PC-3 (cell line): ENCODE measurements at regions of chr7 and their contacts with region 1.

Region 1: DNA sequence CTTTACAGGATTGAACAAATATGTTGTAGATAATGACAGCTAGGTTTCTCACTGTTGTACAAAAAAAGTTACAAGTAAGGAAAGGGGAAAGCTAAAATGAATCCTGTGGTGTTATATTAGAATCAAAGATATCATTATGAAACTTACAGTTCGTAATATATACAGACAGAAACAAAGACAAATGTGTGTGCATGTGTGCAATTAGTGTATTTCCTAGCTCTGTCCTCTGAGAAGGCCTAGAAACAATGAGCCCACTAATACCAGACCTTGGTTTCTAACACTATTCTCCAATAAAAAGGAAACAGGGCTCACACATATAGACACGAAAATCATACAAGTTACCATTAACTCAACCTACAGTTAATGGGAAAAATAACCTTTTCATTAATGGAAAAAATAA is 8.0 kb downstream of the KDM7A start:
- DNase-seq: no peak
- ATAC-seq: no peak
- H3K4me3 ChIP-seq: no peak overlapping the region
- H3K27ac ChIP-seq: no peak overlapping the region
- H3K4me1 ChIP-seq: 0 out of 2 replicates have a peak, but pooled peaks cover 9% of the 10 kb centered on the region
- H3K27me3 ChIP-seq: no peaks in the 10 kb centered on the region
- CTCF ChIP-seq: no peak

Region 2: DNA sequence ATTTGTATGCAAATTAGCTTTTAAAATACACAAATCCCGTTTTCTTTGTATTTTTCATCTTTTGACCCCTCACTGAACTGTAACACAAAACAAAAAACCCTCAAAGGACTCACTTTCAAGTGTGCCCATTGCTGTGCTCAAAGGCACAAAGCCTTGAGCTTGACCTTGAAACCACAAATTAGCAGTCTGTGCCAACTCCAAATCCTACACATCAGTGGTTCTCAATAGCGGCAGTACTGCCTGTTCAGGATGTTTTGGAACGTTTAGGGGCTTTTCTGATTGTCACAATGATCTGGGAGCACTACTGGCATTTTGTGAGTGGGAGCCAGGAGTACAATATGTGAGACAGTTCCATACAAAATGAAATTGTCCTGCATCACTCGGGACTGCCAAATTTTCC is 47.5 kb before region 1 on chr7:
- CTCF ChIA-PET with region 1: no interaction called
- POLR2A ChIA-PET with region 1: interaction called, 10 read pairs
- intact Hi-C with region 1: no loop called
- DNase-seq: no peak
- ATAC-seq: no peak
- H3K4me3 ChIP-seq: no peak overlapping the region
- H3K27ac ChIP-seq: no peak overlapping the region
- H3K4me1 ChIP-seq: no peaks in the 10 kb centered on the region
- H3K27me3 ChIP-seq: no peaks in the 10 kb centered on the region
- CTCF ChIP-seq: no peak

Region 3: GRCh38 chr7:140153666-140154181 is 15.1 kb before region 1 on chr7:
- CTCF ChIA-PET with region 1: no interaction called
- POLR2A ChIA-PET with region 1: no interaction called
- intact Hi-C with region 1: no loop called
- DNase-seq: no peak
- ATAC-seq: no peak
- H3K4me3 ChIP-seq: no peak overlapping the region
- H3K27ac ChIP-seq: no peak overlapping the region
- H3K4me1 ChIP-seq: no peaks in the 10 kb centered on the region
- H3K27me3 ChIP-seq: no peaks in the 10 kb centered on the region
- CTCF ChIP-seq: no peak